Adrenal gland (tissue), 19 donors: ENCODE measurements at regions of chr14 and their contacts with region 1.

Region 1: GRCh38 chr14:64823305-64823861 is 56.3 kb downstream of the SPTB start:
- DNase-seq: peak; percentile 71 to 88 (median 82)
- H3K4me3 ChIP-seq: no peak overlapping the region
- H3K27ac ChIP-seq: no peak overlapping the region
- H3K4me1 ChIP-seq: no peaks in the 10 kb centered on the region
- H3K27me3 ChIP-seq: no peaks in the 10 kb centered on the region
- CTCF ChIP-seq: peak; percentile 71 to 86 (median 78)
- POLR2A ChIP-seq: no peak

Region 2: GRCh38 chr14:64891839-64892375 is 68.5 kb after region 1 on chr14:
- intact Hi-C with region 1: loop called in 1 of 2 experiments (anchors 5 kb)
- DNase-seq: peak in 4 of 7 donors; percentile 34 to 55 (median 43)
- H3K4me3 ChIP-seq: no peak overlapping the region
- H3K27ac ChIP-seq: no peak overlapping the region
- H3K4me1 ChIP-seq: no peaks in the 10 kb centered on the region
- H3K27me3 ChIP-seq: peaks cover 9% of the 10 kb centered on the region
- CTCF ChIP-seq: peak; percentile 34 to 83 (median 74)
- POLR2A ChIP-seq: no peak

Region 3: GRCh38 chr14:64971943-64972791 is 148.8 kb after region 1 on chr14 and contains the start of gene RAB15:
- intact Hi-C with region 1: loop called in 1 of 2 experiments (anchors 10 kb)
- DNase-seq: peak in 3 of 7 donors; percentile 31 to 45 (median 33)
- H3K4me3 ChIP-seq: peak within 1 kb of the TSS; percentile 18 to 95 (median 46)
- H3K27ac ChIP-seq: no peak within 1 kb of the TSS
- H3K4me1 ChIP-seq: peaks cover 5 to 8% of the 10 kb centered on the region in 2 donors
- H3K27me3 ChIP-seq: no peaks in the 10 kb centered on the region
- CTCF ChIP-seq: peak in 1 of 6 experiments; percentile 2
- POLR2A ChIP-seq: no peak
- total RNA-seq, gene RAB15: 0.95 to 8.9 (median 3.5) TPM